Heart left ventricle (tissue), 16 donors: ENCODE measurements at regions of chr14 and their contacts with region 1.

Region 1: DNA sequence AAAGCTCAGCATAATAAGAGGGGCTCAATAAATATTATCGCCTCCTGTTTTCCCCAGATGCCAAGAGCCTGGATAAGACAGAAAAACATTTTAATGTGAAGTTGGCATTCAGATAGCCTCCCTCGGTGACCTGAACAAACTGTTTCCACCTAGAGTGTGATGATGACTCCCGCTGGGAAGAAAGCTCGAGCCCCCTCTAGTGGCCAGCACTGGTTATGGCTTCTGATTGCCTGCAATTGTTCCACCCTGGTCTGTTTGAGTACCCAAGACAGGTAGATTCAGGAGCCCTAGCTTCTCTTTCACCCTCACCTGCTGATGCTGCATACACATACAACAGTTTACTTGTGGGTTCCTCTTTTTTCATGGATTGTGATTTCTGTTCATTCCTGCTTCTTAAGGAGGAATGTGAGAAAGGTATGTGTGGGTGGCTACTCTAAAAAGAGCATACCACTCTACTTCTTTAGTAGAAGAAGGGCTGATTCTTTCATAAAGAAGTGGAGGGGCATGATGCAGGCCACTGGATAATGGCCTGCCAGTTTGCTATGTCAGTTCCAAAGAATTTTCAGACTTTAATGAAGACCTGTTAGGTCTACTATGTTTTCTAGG is 6.4 kb downstream of the ERG28 start:
- DNase-seq: peak; percentile 71 to 83 (median 78)
- ATAC-seq: peak; percentile 79 to 87 (median 84)
- H3K4me3 ChIP-seq: no peak overlapping the region
- H3K27ac ChIP-seq: no peak overlapping the region
- H3K4me1 ChIP-seq: peaks cover 0 to 13% (median 0%) of the 10 kb centered on the region in 12 donors
- H3K27me3 ChIP-seq: no peaks in the 10 kb centered on the region
- CTCF ChIP-seq: peak; percentile 94 to 99 (median 96)
- POLR2A ChIP-seq: no peak

Region 2: GRCh38 chr14:75522224-75522982 is 131.8 kb before region 1 on chr14 and contains the start of gene BATF:
- intact Hi-C with region 1: no loop called
- DNase-seq: peak in 1 of 5 donors; percentile 70
- ATAC-seq: peak in 3 of 4 donors; percentile 35 to 52 (median 37)
- H3K4me3 ChIP-seq: peak within 1 kb of the TSS in 10 of 12 donors; percentile 6 to 65 (median 34)
- H3K27ac ChIP-seq: peak within 1 kb of the TSS in 2 of 12 donors; percentile 42 to 90
- H3K4me1 ChIP-seq: peaks cover 0 to 55% (median 0%) of the 10 kb centered on the region in 12 donors
- H3K27me3 ChIP-seq: peaks cover 0 to 9% (median 0%) of the 10 kb centered on the region in 9 donors
- CTCF ChIP-seq: no peak
- POLR2A ChIP-seq: no peak
- total RNA-seq, gene BATF: 0.40 to 8.3 (median 1.0) TPM in 8 of 9 donors, not detected in the other

Region 3: DNA sequence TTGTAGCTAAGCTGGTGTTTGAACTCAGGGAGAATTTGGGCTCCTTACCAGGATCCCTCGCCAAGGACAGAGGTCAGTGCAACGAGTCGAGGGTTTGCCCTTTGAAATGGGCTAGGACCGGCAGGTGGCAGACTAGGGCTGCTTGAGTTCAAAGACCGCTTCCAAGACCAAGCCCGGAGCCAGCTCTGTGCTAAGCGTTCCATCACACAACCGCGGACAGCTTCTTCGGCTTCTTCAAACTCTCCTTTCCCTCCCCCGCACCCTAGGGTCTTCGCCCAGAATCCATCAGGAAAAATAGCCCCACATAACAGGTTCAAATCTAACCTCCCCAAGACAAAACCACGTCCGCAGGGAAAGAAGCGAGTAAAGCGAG is 76.5 kb before region 1 on chr14:
- intact Hi-C with region 1: loop called (anchors 1 to 2 kb)
- DNase-seq: peak; percentile 82 to 92 (median 87)
- ATAC-seq: peak; percentile 80 to 91 (median 88)
- H3K4me3 ChIP-seq: peak overlapping the region; percentile 30 to 75 (median 61)
- H3K27ac ChIP-seq: peak overlapping the region; percentile 15 to 84 (median 72)
- H3K4me1 ChIP-seq: peaks cover 7 to 31% (median 20%) of the 10 kb centered on the region in 12 donors
- H3K27me3 ChIP-seq: no peaks in the 10 kb centered on the region
- CTCF ChIP-seq: peak; percentile 63 to 90 (median 77)
- POLR2A ChIP-seq: no peak

Region 4: DNA sequence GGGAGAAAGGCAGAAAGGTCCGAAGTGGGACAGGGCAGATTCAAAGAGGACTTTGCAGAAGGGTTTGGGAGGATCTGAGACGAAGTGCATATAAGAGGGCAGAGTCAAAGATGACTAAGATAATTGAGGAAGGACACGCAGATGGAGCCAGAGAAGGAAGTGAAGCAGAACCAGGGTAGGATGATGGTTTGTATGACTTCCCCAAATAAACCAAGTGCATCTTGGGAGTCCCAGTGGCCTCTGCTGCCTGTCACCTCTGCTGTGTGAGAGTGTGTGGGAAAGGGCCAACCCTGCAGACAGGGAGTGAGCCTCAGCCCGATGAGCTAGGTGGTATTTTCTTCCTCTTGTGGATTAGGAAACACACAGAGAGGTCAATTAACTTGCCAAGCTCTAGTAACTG is 39.0 kb before region 1 on chr14:
- intact Hi-C with region 1: no loop called
- DNase-seq: peak in 3 of 5 donors; percentile 26 to 45 (median 35)
- ATAC-seq: peak in 3 of 4 donors; percentile 45 to 77 (median 73)
- H3K4me3 ChIP-seq: no peak overlapping the region
- H3K27ac ChIP-seq: peak overlapping the region in 1 of 12 donors; percentile 91
- H3K4me1 ChIP-seq: peaks cover 0 to 62% (median 11%) of the 10 kb centered on the region in 12 donors
- H3K27me3 ChIP-seq: no peaks in the 10 kb centered on the region
- CTCF ChIP-seq: no peak
- POLR2A ChIP-seq: no peak

Region 5: GRCh38 chr14:75928690-75929181 is 274.5 kb after region 1 on chr14:
- intact Hi-C with region 1: no loop called
- DNase-seq: no peak
- ATAC-seq: peak in 1 of 4 donors; percentile 45
- H3K4me3 ChIP-seq: peak overlapping the region in 7 of 12 donors; percentile 11 to 31 (median 29)
- H3K27ac ChIP-seq: peak overlapping the region in 2 of 12 donors; percentile 9 to 22
- H3K4me1 ChIP-seq: peaks cover 0 to 11% (median 0%) of the 10 kb centered on the region in 12 donors
- H3K27me3 ChIP-seq: no peaks in the 10 kb centered on the region
- CTCF ChIP-seq: no peak
- POLR2A ChIP-seq: no peak